H1 (cell line): ENCODE measurements at regions of chr1 and their contacts with region 1.

Region 1: DNA sequence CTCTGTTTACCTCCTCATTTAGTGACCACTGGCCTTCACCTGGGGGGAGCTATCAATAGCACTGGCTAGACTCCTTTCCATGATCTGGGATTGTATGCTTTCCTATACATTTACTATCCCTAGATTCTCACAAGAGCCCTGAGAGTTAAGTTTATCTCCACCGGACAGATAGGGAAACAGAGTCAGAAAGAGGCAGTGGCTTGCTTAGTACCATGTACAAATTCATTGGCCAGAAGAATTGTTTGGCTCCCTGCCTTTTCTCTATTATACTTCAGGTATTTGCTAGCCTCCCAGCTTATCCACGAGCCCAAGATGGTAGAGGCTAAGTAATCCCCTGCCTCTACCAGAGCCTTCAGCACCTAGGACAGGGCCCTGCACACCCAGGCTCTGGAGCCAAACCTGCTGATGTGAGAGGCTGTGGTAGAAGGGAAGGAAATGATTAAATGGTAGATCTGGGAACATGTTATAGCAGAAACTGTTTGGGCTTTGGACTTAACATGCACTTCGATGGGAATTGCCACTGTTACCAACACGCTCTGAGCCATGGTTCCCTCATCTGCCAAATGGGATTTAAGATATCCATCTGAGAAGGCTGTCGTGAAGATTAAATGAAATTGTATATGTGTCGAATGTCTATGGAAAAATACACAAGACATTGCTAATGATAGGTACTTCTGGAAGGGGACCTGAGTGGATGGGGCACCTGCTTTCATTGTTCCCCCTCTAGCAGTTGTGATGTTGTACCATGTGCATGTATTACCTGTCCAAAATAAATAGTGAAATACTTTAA is 3.1 kb upstream of the BLACAT1 start:
- DNase-seq: peak in 1 of 2 experiments; percentile 80
- H3K4me3 ChIP-seq: no peak overlapping the region
- H3K27ac ChIP-seq: no peak overlapping the region
- H3K4me1 ChIP-seq: peaks cover 7 to 23% (median 13%) of the 10 kb centered on the region in 4 experiments
- H3K27me3 ChIP-seq: peaks cover 0 to 2% (median 0%) of the 10 kb centered on the region in 4 experiments; a peak in 2 of 7 replicates
- CTCF ChIP-seq: no peak
- EP300 ChIP-seq: no peak
- POLR2A ChIP-seq: no peak
- RAD21 ChIP-seq: peak in 1 of 2 experiments; percentile 32; a peak in 1 of 4 replicates

Region 2: GRCh38 chr1:205365945-205366463 is 93.0 kb before region 1 on chr1:
- CTCF ChIA-PET with region 1: no interaction called
- POLR2A ChIA-PET with region 1: no interaction called
- DNase-seq: no peak
- H3K4me3 ChIP-seq: no peak overlapping the region
- H3K27ac ChIP-seq: no peak overlapping the region
- H3K4me1 ChIP-seq: no peaks in the 10 kb centered on the region
- H3K27me3 ChIP-seq: 0 out of 7 replicates have a peak, but pooled peaks cover 0 to 2% (median 0%) of the 10 kb centered on the region in 4 experiments
- CTCF ChIP-seq: no peak
- EP300 ChIP-seq: no peak
- POLR2A ChIP-seq: no peak
- RAD21 ChIP-seq: no peak

Region 3: GRCh38 chr1:205416322-205416721 is 42.6 kb before region 1 on chr1:
- CTCF ChIA-PET with region 1: interaction called, 479 read pairs
- POLR2A ChIA-PET with region 1: interaction called, 13 read pairs
- DNase-seq: no peak
- H3K4me3 ChIP-seq: no peak overlapping the region
- H3K27ac ChIP-seq: no peak overlapping the region
- H3K4me1 ChIP-seq: no peaks in the 10 kb centered on the region
- H3K27me3 ChIP-seq: no peaks in the 10 kb centered on the region
- CTCF ChIP-seq: no peak
- EP300 ChIP-seq: no peak
- POLR2A ChIP-seq: no peak
- RAD21 ChIP-seq: no peak

Region 4: GRCh38 chr1:205440476-205441317 is 18.3 kb before region 1 on chr1:
- CTCF ChIA-PET with region 1: interaction called, 479 read pairs
- POLR2A ChIA-PET with region 1: interaction called, 220 read pairs
- DNase-seq: peak in 1 of 2 experiments; percentile 65
- H3K4me3 ChIP-seq: no peak overlapping the region
- H3K27ac ChIP-seq: no peak overlapping the region
- H3K4me1 ChIP-seq: peaks cover 40 to 69% (median 53%) of the 10 kb centered on the region in 4 experiments
- H3K27me3 ChIP-seq: peaks cover 0 to 10% (median 4%) of the 10 kb centered on the region in 4 experiments; a peak in 1 of 7 replicates
- CTCF ChIP-seq: no peak
- EP300 ChIP-seq: no peak
- POLR2A ChIP-seq: 0 out of 3 replicates have a peak, but pooled peaks of 1 of the 2 experiments have one; percentile 17
- RAD21 ChIP-seq: no peak

Region 5: DNA sequence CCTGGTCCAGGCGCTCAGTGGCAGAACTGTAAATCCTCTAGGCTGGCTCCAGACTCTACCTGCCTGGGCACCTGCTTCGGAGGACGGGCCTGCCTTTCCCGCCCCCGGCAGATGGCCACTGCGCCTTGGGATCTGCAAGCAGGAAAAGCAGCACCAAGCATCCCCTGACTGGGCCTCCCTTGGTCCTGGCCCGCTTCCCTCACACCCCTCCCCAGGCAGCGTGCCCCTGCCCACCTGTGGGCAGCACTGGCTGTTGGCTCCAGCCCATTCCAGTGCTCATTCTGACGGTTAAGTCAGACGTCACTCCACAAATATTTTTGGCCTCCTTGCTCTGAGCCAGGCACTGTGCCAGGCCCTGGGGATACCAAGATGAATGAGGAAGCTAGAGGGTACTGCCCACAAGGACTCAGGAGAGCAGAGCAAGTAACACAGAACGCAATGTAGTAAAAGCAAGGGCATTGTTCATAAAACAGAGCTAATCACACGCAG is 18.8 kb after region 1 on chr1:
- CTCF ChIA-PET with region 1: interaction called, 767 read pairs
- POLR2A ChIA-PET with region 1: interaction called, 10 read pairs
- DNase-seq: no peak
- H3K4me3 ChIP-seq: no peak overlapping the region
- H3K27ac ChIP-seq: no peak overlapping the region
- H3K4me1 ChIP-seq: peaks cover 0 to 29% (median 19%) of the 10 kb centered on the region in 4 experiments; a peak in 6 of 7 replicates
- H3K27me3 ChIP-seq: peaks cover 0 to 2% (median 0%) of the 10 kb centered on the region in 4 experiments; a peak in 3 of 7 replicates
- CTCF ChIP-seq: no peak
- EP300 ChIP-seq: no peak
- POLR2A ChIP-seq: no peak
- RAD21 ChIP-seq: no peak